Panc1 (cell line): ENCODE measurements at regions of chr10 and their contacts with region 1.

Region 1: GRCh38 chr10:17586821-17587234 is 30.3 kb downstream of the HACD1 start:
- DNase-seq: no peak
- ATAC-seq: peak; percentile 53; the same call in 1 of the 2 replicates
- H3K4me3 ChIP-seq: no peak overlapping the region
- H3K27ac ChIP-seq: no peak overlapping the region
- H3K4me1 ChIP-seq: no peaks in the 10 kb centered on the region
- H3K27me3 ChIP-seq: no peaks in the 10 kb centered on the region
- CTCF ChIP-seq: no peak

Region 2: DNA sequence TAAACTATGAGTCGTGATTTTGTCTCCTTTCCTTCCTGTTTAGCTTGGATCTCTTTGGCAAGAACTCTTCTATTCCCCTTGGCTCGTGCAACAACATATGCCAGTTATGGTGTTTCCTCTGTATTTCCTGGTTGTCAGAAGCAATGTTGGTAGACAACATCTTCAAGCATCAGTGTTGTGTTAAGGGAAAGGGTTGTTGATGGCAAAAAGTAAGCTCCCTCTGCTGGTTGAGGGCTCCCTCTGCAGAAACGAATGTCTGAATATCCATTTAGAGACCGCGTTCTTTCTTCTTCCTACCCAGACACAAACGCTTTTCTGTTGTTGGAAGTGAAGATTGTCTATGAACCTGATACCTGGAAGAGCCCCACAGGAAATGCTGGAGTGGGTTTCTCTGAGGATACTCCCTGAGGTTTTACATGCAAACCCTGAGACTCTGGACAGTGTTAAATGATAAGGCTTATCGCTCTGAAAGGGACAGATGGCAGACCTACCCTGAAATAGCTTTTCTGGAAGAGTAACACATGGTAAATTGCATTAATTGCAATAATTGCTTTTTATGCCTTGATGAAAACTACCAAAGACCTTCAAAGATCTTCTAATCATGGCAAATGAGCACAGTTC is 1041.6 kb before region 1 on chr10:
- CTCF ChIA-PET with region 1: no interaction called
- POLR2A ChIA-PET with region 1: interaction called, 13 read pairs
- in situ Hi-C with region 1: no loop called
- intact Hi-C with region 1: no loop called
- DNase-seq: peak; percentile 22
- ATAC-seq: no peak
- H3K4me3 ChIP-seq: no peak overlapping the region
- H3K27ac ChIP-seq: no peak overlapping the region
- H3K4me1 ChIP-seq: peaks cover 3% of the 10 kb centered on the region; the same call in 1 of the 2 replicates
- H3K27me3 ChIP-seq: no peaks in the 10 kb centered on the region; the same call in 1 of the 2 replicates
- CTCF ChIP-seq: peak; percentile 75

Region 3: GRCh38 chr10:17703706-17704105 is 116.9 kb after region 1 on chr10:
- CTCF ChIA-PET with region 1: interaction called, 10 read pairs
- POLR2A ChIA-PET with region 1: no interaction called
- in situ Hi-C with region 1: no loop called
- intact Hi-C with region 1: no loop called
- DNase-seq: no peak
- ATAC-seq: no peak
- H3K4me3 ChIP-seq: no peak overlapping the region
- H3K27ac ChIP-seq: no peak overlapping the region
- H3K4me1 ChIP-seq: no peaks in the 10 kb centered on the region
- H3K27me3 ChIP-seq: no peaks in the 10 kb centered on the region
- CTCF ChIP-seq: no peak